ENCODE measurements at regions of chr17 and their contacts with region 1.

Region 1: GRCh38 chr17:41801374-41802271 is 10.1 kb downstream of the P3H4 start:
- DNase-seq: peak; percentile 80 to 89
- H3K4me3 ChIP-seq: peak overlapping the region in 2 of 3 donors; percentile 26 to 54
- H3K27ac ChIP-seq: peak overlapping the region; percentile 76 to 80
- H3K4me1 ChIP-seq: peaks cover 4 to 5% of the 10 kb centered on the region in 2 donors
- H3K27me3 ChIP-seq: no peaks in the 10 kb centered on the region
- CTCF ChIP-seq: peak; percentile 98 to 99 (median 99)
- POLR2A ChIP-seq: no peak

Region 2: GRCh38 chr17:39946551-39947330 is 1854.9 kb before region 1 on chr17:
- intact Hi-C with region 1: loop called (anchors 5 kb)
- DNase-seq: no peak
- H3K4me3 ChIP-seq: no peak overlapping the region
- H3K27ac ChIP-seq: peak overlapping the region in 1 of 2 donors; percentile 32
- H3K4me1 ChIP-seq: no peaks in the 10 kb centered on the region
- H3K27me3 ChIP-seq: no peaks in the 10 kb centered on the region
- CTCF ChIP-seq: no peak
- POLR2A ChIP-seq: no peak

Region 3: DNA sequence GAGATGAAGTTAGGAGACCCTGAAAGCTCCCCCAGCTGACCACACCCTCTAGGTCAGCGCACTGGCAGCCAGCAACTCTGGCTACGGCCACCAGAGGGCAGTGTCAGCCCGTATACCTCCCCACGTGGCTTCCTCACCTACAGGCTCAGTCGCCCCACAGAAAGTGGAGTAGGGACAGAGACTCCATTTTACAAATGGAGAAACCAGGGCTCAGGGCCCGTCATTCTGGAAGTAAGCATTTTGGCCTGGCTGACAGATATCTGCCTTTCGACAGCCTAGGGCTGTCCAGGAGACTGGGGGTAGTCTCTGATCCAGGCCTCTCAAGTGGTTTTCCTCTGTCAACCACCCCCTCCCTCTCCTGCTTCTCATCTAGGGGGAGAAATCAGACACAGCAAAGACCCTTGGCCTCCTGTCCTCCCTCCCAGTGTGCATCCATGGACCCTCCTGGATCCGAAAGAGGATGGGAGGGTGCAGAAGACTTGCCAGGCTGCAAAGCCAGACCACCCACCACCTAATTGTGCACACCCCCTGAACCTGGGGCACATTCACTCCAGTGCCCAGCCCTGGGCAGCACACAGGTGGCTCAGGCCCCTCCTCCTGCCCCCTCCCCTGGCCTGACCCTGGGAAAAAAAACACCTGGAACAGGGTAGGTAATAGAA is 63.4 kb before region 1 on chr17:
- intact Hi-C with region 1: loop called (anchors 5 kb)
- DNase-seq: peak; percentile 76 to 83
- H3K4me3 ChIP-seq: no peak overlapping the region
- H3K27ac ChIP-seq: no peak overlapping the region
- H3K4me1 ChIP-seq: peaks cover 10% of the 10 kb centered on the region in 2 donors
- H3K27me3 ChIP-seq: peaks cover 10 to 41% of the 10 kb centered on the region in 2 donors
- CTCF ChIP-seq: peak; percentile 95 to 99 (median 98)
- POLR2A ChIP-seq: no peak

Region 4: GRCh38 chr17:41844971-41845370 is 43.3 kb after region 1 on chr17:
- intact Hi-C with region 1: no loop called
- DNase-seq: no peak
- H3K4me3 ChIP-seq: no peak overlapping the region
- H3K27ac ChIP-seq: no peak overlapping the region
- H3K4me1 ChIP-seq: no peaks in the 10 kb centered on the region
- H3K27me3 ChIP-seq: no peaks in the 10 kb centered on the region
- CTCF ChIP-seq: no peak
- POLR2A ChIP-seq: no peak

Region 5: GRCh38 chr17:41966463-41967140 is 165.0 kb after region 1 on chr17 and contains the start of gene CNP:
- intact Hi-C with region 1: no loop called
- DNase-seq: peak; percentile 85 to 89
- H3K4me3 ChIP-seq: peak within 1 kb of the TSS; percentile 92 to 94 (median 92)
- H3K27ac ChIP-seq: peak within 1 kb of the TSS; percentile 90 to 91
- H3K4me1 ChIP-seq: peaks cover 0 to 14% of the 10 kb centered on the region in 2 donors
- H3K27me3 ChIP-seq: no peaks in the 10 kb centered on the region
- CTCF ChIP-seq: no peak
- POLR2A ChIP-seq: no peak
- total RNA-seq, gene CNP: 51.8 to 55.5 (median 53.7) TPM

Measured in breast epithelium (tissue), 4 donors.